KBM-7 (cell line): ENCODE measurements at regions of chr17 and their contacts with region 1.

Region 1: DNA sequence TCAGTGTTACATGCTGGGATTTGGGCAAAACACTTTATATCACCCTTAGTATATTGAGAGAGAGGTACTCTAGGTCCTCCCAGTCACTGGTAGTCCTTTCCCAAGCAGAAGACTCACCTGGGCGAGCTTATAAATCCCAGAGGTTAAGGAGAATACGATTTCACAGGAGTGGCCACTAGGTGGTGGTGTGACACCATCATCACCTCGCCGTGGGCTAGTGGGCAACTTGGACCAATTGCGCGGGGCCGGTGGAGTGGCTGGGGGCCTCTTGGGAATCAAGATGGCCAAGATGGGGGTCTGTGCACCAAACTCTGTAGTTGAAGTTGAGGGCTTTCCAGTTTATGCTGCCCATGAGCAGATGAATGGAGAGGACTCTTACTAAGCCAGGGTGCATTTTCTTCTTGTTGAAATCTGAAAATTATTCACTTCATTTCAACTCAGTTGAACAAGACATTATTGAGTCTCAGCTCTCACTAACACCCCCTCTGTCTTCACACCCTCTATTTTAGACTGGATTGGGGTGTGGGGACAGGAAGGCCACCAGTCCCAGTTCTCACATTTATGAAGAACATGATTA is 38.2 kb upstream of the PIRT start:
- DNase-seq: peak; percentile 39

Region 2: DNA sequence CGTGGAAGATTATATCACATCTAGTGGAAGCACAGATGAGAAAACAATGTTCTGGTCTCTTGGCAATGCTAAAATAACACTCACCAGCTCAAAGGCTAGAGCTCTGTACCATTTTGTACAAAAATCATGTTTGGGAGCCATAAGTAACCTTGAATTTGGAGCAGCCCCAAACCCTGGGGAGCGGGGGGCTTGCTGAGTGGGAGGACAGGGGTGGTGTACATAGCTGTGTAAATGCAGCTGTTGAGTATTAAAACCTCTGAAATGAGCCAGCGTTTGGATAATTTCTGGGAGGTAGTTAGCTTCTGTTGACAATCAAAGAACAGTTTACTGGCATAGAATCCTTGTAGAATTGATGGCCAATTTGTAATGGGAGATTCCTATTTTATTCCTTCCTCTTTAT is 458.6 kb before region 1 on chr17:
- in situ Hi-C with region 1: no loop called
- DNase-seq: no peak

Region 3: DNA sequence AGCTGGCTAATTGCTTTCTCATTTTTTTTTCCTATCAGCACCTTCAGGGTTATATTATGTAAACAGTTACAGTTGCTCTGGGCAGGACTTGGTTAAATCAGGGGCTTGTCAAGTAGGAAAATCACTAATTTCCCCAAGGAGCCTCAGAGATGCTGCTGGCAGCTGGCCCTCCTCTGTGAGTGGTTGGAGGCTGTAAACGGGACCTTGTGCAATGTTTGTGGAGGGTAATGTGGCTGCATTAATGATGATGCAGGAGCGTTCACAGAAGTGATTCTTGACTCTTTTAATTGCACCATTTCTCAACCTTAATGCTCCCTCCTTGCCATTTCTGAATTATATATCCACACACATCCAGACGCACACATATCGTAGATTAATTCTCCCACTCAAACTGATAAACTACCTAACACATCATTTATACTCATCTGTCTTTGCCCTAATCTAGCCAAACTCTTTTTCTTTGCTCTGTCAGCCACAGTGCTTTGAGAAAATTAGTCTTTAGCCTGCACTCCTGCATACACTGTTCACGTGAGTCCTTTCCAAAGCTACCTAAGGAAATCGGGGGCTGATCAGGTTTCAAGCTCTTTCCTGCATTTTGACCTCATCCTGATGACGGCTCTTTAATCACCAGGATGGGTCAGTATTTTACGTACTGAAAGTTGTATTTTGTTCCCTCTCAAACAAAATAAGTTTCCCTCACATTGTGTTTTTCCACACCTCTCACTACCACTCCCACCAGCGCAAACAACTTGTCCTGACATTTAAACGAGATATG is 116.2 kb after region 1 on chr17:
- in situ Hi-C with region 1: loop called (anchors 25 kb)
- DNase-seq: no peak

Region 4: GRCh38 chr17:11144358-11145233 is 268.5 kb after region 1 on chr17:
- in situ Hi-C with region 1: no loop called
- DNase-seq: peak; percentile 27